ENCODE measurements at regions of chr12 and their contacts with region 1.

Region 1: GRCh38 chr12:3299929-3300832 is 190.8 kb upstream of the PRMT8 start:
- DNase-seq: peak; percentile 89
- H3K4me3 ChIP-seq: peak overlapping the region; percentile 15 to 56; a peak in 3 of 4 replicates
- H3K27ac ChIP-seq: peak overlapping the region in 1 of 2 experiments; percentile 69; a peak in 2 of 4 replicates
- H3K4me1 ChIP-seq: peaks cover 4 to 39% of the 10 kb centered on the region in 2 experiments; a peak in 3 of 4 replicates
- H3K27me3 ChIP-seq: no peaks in the 10 kb centered on the region
- CTCF ChIP-seq: peak; percentile 93
- EP300 ChIP-seq: peak in 1 of 2 experiments; percentile 51; a peak in 1 of 4 replicates
- RAD21 ChIP-seq: peak; percentile 87

Region 2: DNA sequence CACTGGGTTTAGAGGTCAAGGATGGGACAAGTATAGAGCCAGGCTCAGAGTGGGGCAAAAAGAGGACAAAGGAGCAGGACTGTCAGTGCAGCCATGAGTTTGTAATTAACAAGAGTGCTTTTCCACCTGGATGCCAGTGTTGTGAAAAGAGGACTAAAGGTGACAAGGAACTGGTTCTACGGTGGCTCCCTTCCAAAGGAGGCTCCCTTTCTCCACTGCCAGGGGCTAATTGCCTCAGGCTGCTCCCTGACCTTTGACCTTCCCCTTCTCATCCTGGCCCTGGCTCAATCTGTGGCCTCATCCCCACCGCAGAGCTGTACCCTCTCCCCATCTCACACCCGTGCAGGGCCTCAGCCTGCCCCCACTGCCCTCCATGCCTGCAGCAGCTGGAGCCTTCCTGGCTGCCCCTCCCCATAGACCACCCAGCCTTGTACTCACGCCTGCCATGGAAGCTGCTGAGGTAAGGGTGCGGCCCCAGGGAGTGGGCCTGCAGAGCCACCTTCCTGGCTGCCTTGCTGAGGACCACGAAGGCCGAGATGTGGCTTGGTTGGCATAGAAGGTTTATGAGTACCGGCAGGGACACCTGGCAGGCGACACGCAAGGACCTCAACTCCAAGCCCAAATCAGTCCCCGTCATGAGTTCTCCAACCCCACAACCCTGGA is 530.2 kb before region 1 on chr12:
- CTCF ChIA-PET with region 1: no interaction called
- POLR2A ChIA-PET with region 1: no interaction called
- DNase-seq: no peak
- H3K4me3 ChIP-seq: no peak overlapping the region
- H3K27ac ChIP-seq: no peak overlapping the region
- H3K4me1 ChIP-seq: no peaks in the 10 kb centered on the region
- H3K27me3 ChIP-seq: peaks cover 5% of the 10 kb centered on the region; the same call in 1 of the 2 replicates
- CTCF ChIP-seq: no peak
- EP300 ChIP-seq: no peak
- RAD21 ChIP-seq: no peak

Region 3: DNA sequence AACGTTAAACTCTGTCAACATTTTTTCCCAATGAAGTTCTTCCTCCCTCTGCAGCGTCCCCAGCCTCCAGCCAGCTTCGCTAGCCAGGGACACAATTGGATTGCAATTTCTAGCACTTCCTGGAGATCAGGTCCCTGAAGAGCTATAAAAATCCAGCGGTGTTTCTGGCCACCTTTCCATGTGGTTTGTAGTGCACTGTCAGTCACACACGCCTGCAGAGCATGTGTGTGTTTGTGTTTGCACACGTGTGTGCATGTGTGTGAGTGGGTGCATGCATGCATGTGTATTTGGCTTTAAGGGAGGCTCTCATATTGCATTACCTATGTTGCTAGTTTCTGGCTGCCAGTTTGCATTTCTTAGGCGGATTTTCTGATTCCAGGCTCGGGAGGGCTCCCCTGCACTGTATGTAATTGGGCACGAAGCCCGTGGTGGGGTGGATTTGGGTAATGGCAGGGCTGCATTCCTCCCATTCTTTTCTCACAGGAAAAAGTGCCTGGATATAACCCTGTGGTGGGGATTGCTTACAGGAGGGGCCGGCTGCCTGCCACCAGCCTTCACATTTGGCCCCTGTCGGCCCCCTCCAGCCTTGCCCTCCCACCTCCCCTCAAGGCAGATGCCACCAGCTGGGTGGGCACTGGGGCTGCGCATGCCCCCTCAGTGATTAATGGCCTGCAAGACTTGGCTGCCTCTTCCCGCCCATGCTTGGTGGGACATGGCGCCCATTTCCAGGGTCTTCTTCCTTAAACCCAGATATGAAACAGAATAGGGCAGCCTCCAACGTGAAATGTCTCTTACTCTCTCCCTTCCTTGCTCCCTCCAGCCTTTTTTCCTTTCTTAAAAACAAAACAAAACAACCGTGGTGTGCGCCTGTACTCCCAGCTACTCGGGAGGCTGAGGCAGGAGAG is 149.0 kb before region 1 on chr12:
- CTCF ChIA-PET with region 1: interaction called, 16 read pairs
- POLR2A ChIA-PET with region 1: interaction called, 3 read pairs
- DNase-seq: peak; percentile 22
- H3K4me3 ChIP-seq: no peak overlapping the region
- H3K27ac ChIP-seq: no peak overlapping the region
- H3K4me1 ChIP-seq: peaks cover 7 to 32% of the 10 kb centered on the region in 2 experiments; a peak in 3 of 4 replicates
- H3K27me3 ChIP-seq: no peaks in the 10 kb centered on the region
- CTCF ChIP-seq: no peak
- EP300 ChIP-seq: no peak
- RAD21 ChIP-seq: no peak

Region 4: GRCh38 chr12:3336606-3337311 is 36.6 kb after region 1 on chr12:
- CTCF ChIA-PET with region 1: interaction called, 63 read pairs
- POLR2A ChIA-PET with region 1: no interaction called
- DNase-seq: peak; percentile 50
- H3K4me3 ChIP-seq: no peak overlapping the region
- H3K27ac ChIP-seq: peak overlapping the region in 1 of 2 experiments; percentile 16; a peak in 1 of 4 replicates
- H3K4me1 ChIP-seq: peaks cover 0 to 7% of the 10 kb centered on the region in 2 experiments; a peak in 1 of 4 replicates
- H3K27me3 ChIP-seq: peaks cover 14% of the 10 kb centered on the region; the same call in 1 of the 2 replicates
- CTCF ChIP-seq: no peak
- EP300 ChIP-seq: no peak
- RAD21 ChIP-seq: no peak

Region 5: GRCh38 chr12:3461391-3461790 is 161.2 kb after region 1 on chr12:
- CTCF ChIA-PET with region 1: interaction called, 26 read pairs
- POLR2A ChIA-PET with region 1: no interaction called
- DNase-seq: no peak
- H3K4me3 ChIP-seq: no peak overlapping the region
- H3K27ac ChIP-seq: no peak overlapping the region
- H3K4me1 ChIP-seq: no peaks in the 10 kb centered on the region
- H3K27me3 ChIP-seq: no peaks in the 10 kb centered on the region
- CTCF ChIP-seq: no peak
- EP300 ChIP-seq: no peak
- RAD21 ChIP-seq: no peak

Region 6: GRCh38 chr12:3641428-3642018 is 341.3 kb after region 1 on chr12:
- CTCF ChIA-PET with region 1: interaction called, 15 read pairs
- POLR2A ChIA-PET with region 1: no interaction called
- DNase-seq: peak; percentile 47
- H3K4me3 ChIP-seq: no peak overlapping the region
- H3K27ac ChIP-seq: peak overlapping the region; percentile 7 to 70; a peak in 3 of 4 replicates
- H3K4me1 ChIP-seq: peaks cover 8 to 11% of the 10 kb centered on the region in 2 experiments; a peak in 2 of 4 replicates
- H3K27me3 ChIP-seq: no peaks in the 10 kb centered on the region
- CTCF ChIP-seq: no peak
- EP300 ChIP-seq: peak in 1 of 2 experiments; percentile 90; a peak in 2 of 4 replicates
- RAD21 ChIP-seq: no peak

Region 7: GRCh38 chr12:3698218-3698974 is 398.2 kb after region 1 on chr12:
- CTCF ChIA-PET with region 1: interaction called, 17 read pairs
- POLR2A ChIA-PET with region 1: no interaction called
- DNase-seq: peak; percentile 48
- H3K4me3 ChIP-seq: no peak overlapping the region
- H3K27ac ChIP-seq: peak overlapping the region; percentile 68 to 89
- H3K4me1 ChIP-seq: peaks cover 11 to 15% of the 10 kb centered on the region in 2 experiments
- H3K27me3 ChIP-seq: no peaks in the 10 kb centered on the region
- CTCF ChIP-seq: no peak
- EP300 ChIP-seq: peak; percentile 47 to 88; a peak in 3 of 4 replicates
- RAD21 ChIP-seq: no peak

Region 8: GRCh38 chr12:3791256-3792252 is 491.4 kb after region 1 on chr12:
- CTCF ChIA-PET with region 1: interaction called, 36 read pairs
- POLR2A ChIA-PET with region 1: no interaction called
- DNase-seq: no peak
- H3K4me3 ChIP-seq: no peak overlapping the region
- H3K27ac ChIP-seq: no peak overlapping the region
- H3K4me1 ChIP-seq: no peaks in the 10 kb centered on the region
- H3K27me3 ChIP-seq: no peaks in the 10 kb centered on the region
- CTCF ChIP-seq: no peak
- EP300 ChIP-seq: no peak
- RAD21 ChIP-seq: no peak